Activated naive CD4-positive, alpha-beta T cell treated with anti-CD3 and anti-CD28 coated beads for 36 hours (primary cell): ENCODE measurements at regions of chr1 and their contacts with region 1.

Region 1: DNA sequence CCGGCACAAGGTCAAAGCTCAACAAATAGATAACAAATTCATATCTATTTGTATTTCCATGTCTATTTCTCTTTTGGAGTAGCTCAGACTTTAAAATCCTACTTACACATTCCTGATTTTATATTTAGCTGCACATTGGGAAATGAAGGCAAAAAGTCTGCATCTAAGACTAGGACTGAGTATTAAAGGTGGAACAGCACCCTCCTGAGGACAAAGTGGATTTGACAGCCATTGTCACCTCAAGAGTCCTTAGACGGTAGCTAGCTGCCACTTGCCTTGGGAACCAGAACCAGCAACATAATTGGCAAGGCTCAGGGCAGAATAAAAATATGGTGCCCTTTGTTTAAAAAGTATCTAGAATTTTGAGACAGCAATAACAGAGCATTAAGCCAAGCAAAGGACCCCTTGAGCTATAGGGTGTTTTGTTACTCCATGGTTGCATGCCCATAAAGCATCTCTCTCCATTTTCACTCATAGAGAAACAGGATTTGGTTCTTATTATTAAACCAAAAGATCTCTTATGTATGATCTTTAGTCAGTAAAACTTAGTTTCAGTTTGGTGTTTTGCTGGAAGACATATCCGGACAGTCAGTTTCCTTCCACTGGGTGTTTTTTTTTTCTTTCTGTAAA is 30.0 kb upstream of the SGIP1 start:
- DNase-seq: peak; percentile 74
- H3K4me3 Mint-ChIP-seq: no peak overlapping the region
- H3K27ac Mint-ChIP-seq: no peak overlapping the region
- H3K4me1 Mint-ChIP-seq: no peaks in the 10 kb centered on the region
- H3K27me3 Mint-ChIP-seq: peaks cover 15% of the 10 kb centered on the region

Region 2: GRCh38 chr1:66253330-66253921 is 250.5 kb before region 1 on chr1:
- CTCF ChIA-PET with region 1: interaction called, 5 read pairs
- intact Hi-C with region 1: loop called (anchors 1 kb)
- DNase-seq: peak; percentile 39
- H3K4me3 Mint-ChIP-seq: no peak overlapping the region
- H3K27ac Mint-ChIP-seq: no peak overlapping the region
- H3K4me1 Mint-ChIP-seq: peaks cover 48% of the 10 kb centered on the region
- H3K27me3 Mint-ChIP-seq: no peaks in the 10 kb centered on the region

Region 3: GRCh38 chr1:66360285-66360724 is 143.7 kb before region 1 on chr1:
- CTCF ChIA-PET with region 1: no interaction called
- intact Hi-C with region 1: loop called (anchors 5 kb)
- DNase-seq: no peak
- H3K4me3 Mint-ChIP-seq: no peak overlapping the region
- H3K27ac Mint-ChIP-seq: no peak overlapping the region
- H3K4me1 Mint-ChIP-seq: peaks cover 73% of the 10 kb centered on the region
- H3K27me3 Mint-ChIP-seq: no peaks in the 10 kb centered on the region